ENCODE measurements at regions of chr4 and their contacts with region 1.

Region 1: DNA sequence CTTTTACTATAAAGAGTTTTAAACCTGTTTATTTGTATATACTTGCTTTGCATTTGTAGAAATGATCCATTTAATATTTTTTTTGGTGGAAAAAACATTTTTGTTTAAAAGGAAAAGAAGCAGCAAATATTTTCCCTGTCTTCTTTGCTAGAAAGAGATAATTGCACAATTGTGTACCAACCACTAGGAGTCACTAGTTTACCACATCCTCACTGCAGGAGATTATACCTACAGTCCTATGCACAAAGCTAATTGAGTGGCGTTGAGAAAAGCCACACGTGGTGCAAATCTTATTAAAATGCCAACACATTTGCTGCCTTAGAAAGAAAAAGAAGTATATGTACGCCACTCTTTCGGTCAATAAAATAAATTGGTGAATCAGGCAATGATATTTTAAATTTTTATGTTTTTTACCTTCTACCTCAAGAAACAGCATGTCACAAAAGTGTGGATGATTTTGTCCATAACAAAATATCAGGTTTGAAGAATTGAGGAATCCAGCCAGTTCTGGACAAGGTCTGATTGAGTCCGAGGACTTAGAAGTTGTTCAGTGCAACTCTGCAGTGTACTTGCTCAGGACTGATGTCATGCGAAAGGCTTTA is 102.9 kb downstream of the GRXCR1 start:
- DNase-seq: peak; percentile 6
- H3K4me3 ChIP-seq: no peak overlapping the region
- H3K27ac ChIP-seq: no peak overlapping the region
- H3K4me1 ChIP-seq: no peaks in the 10 kb centered on the region
- H3K27me3 ChIP-seq: no peaks in the 10 kb centered on the region
- CTCF ChIP-seq: peak; percentile 81 to 87

Region 2: GRCh38 chr4:43471950-43472349 is 476.5 kb after region 1 on chr4:
- CTCF ChIA-PET with region 1: no interaction called
- dilution Hi-C with region 1: no loop called
- in situ Hi-C with region 1: no loop called
- intact Hi-C with region 1: loop called (anchors 2 kb)
- DNase-seq: no peak
- H3K4me3 ChIP-seq: no peak overlapping the region
- H3K27ac ChIP-seq: no peak overlapping the region
- H3K4me1 ChIP-seq: no peaks in the 10 kb centered on the region
- H3K27me3 ChIP-seq: no peaks in the 10 kb centered on the region
- CTCF ChIP-seq: peak in 1 of 2 donors; percentile 13

Measured in mammary epithelial cell (primary cell).